ENCODE measurements at regions of chr18 and their contacts with region 1.

Region 1: GRCh38 chr18:23032030-23032582 is 99.0 kb downstream of the RBBP8 start:
- DNase-seq: no peak
- ATAC-seq: peak; percentile 31; the same call in 1 of the 2 replicates
- H3K4me3 ChIP-seq: no peak overlapping the region
- H3K27ac ChIP-seq: no peak overlapping the region
- H3K4me1 ChIP-seq: peaks cover 3 to 16% of the 10 kb centered on the region in 2 experiments; a peak in 3 of 4 replicates
- H3K27me3 ChIP-seq: no peaks in the 10 kb centered on the region
- CTCF ChIP-seq: no peak
- POLR2A ChIP-seq: no peak
- RAD21 ChIP-seq: no peak

Region 2: GRCh38 chr18:22946846-22947245 is 85.3 kb before region 1 on chr18:
- CTCF ChIA-PET with region 1: no interaction called
- POLR2A ChIA-PET with region 1: no interaction called
- RAD21 ChIA-PET with region 1: no interaction called
- intact Hi-C with region 1: no loop called
- DNase-seq: no peak
- ATAC-seq: no peak
- H3K4me3 ChIP-seq: no peak overlapping the region
- H3K27ac ChIP-seq: no peak overlapping the region
- H3K4me1 ChIP-seq: no peaks in the 10 kb centered on the region
- H3K27me3 ChIP-seq: no peaks in the 10 kb centered on the region
- CTCF ChIP-seq: no peak
- POLR2A ChIP-seq: no peak
- RAD21 ChIP-seq: no peak

Region 3: DNA sequence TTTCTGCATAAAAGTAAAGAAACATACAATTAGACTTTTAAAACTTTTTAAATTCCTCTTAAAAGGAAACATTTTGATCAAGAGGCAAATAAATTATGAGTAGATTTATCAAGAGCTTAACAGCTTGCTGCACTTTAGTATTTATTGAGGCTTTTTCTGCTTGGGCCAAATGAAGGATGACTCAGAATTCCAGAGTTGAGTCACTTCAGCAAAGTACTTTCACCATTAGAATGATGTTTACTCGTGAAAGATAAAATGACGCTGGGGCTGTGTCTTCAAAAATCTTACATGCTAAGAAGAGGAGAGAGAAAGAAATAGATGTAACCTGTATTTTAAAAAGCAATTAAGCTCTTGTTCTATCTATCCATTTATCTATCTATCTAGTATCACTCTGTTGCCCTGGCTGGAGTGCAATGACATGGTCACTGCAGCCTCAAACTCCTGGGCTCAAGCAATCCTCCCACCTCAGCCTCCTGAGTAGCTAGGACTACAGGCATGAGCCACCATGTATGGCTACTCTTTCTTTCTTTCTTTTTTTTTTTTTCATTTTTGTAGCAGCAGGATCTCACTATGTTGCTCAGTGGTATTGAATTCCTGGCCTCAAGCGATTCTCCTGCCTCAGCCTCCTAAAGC is 345.7 kb after region 1 on chr18:
- CTCF ChIA-PET with region 1: interaction called, 12 read pairs
- POLR2A ChIA-PET with region 1: interaction called, 3 read pairs
- RAD21 ChIA-PET with region 1: interaction called in 1 of 2 experiments, 4 read pairs
- intact Hi-C with region 1: loop called (anchors 5 kb)
- DNase-seq: peak; percentile 26
- ATAC-seq: peak; percentile 58
- H3K4me3 ChIP-seq: no peak overlapping the region
- H3K27ac ChIP-seq: peak overlapping the region; percentile 10; the same call in 1 of the 2 replicates
- H3K4me1 ChIP-seq: peaks cover 16 to 22% of the 10 kb centered on the region in 2 experiments
- H3K27me3 ChIP-seq: no peaks in the 10 kb centered on the region
- CTCF ChIP-seq: no peak
- POLR2A ChIP-seq: no peak
- RAD21 ChIP-seq: no peak

Region 4: GRCh38 chr18:23406271-23406787 is 374.2 kb after region 1 on chr18:
- CTCF ChIA-PET with region 1: interaction called, 29 read pairs
- POLR2A ChIA-PET with region 1: no interaction called
- RAD21 ChIA-PET with region 1: no interaction called
- intact Hi-C with region 1: loop called (anchors 1 kb)
- DNase-seq: no peak
- ATAC-seq: no peak
- H3K4me3 ChIP-seq: no peak overlapping the region
- H3K27ac ChIP-seq: no peak overlapping the region
- H3K4me1 ChIP-seq: peaks cover 3 to 8% of the 10 kb centered on the region in 2 experiments; a peak in 2 of 4 replicates
- H3K27me3 ChIP-seq: no peaks in the 10 kb centered on the region
- CTCF ChIP-seq: no peak
- POLR2A ChIP-seq: no peak
- RAD21 ChIP-seq: no peak

Region 5: GRCh38 chr18:24627644-24628315 is 1595.7 kb after region 1 on chr18:
- CTCF ChIA-PET with region 1: no interaction called
- POLR2A ChIA-PET with region 1: no interaction called
- RAD21 ChIA-PET with region 1: no interaction called
- intact Hi-C with region 1: no loop called
- DNase-seq: no peak
- ATAC-seq: no peak
- H3K4me3 ChIP-seq: no peak overlapping the region
- H3K27ac ChIP-seq: no peak overlapping the region
- H3K4me1 ChIP-seq: no peaks in the 10 kb centered on the region
- H3K27me3 ChIP-seq: peaks cover 20% of the 10 kb centered on the region
- CTCF ChIP-seq: no peak
- POLR2A ChIP-seq: no peak
- RAD21 ChIP-seq: no peak

Measured in HCT116 (cell line).